ENCODE measurements at regions of chr1 and their contacts with region 1.

Region 1: DNA sequence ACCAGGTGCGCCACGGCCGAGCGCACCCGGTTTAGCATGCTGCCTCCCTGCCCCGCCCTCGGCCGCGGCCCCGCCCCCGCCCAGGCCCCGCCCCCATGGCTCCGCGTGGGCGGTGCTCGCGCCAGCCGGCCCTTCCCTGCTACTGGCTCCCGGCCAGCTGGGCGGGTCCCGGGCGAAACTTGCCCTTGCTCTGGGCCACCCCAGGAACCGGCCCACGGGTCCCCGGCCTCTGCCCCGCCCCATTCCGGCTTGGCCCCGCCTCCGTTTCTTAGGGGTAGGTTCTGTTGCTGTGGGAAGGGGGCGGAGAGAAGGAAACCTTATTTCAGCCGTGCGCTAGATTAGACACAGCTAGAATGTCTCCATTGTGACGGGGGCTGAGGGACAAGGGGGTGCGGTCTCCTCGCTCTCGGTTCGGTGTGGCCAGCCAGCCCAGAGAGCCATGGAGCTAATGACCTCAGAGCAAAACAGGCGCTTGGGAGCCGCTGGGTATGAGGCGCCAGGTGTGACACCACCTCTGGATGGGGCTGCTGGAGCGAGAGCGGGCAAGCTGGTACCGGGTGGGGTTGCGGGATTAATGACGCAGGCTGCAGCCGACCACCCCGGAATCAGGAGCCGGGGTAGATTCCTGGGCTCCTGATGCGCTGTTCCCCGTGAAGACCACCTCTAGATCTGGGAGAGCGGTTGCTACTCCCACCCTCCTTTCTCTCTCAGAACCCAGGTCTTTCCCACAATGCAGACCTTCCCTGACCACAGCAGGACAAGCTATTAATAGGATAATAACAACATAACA is at the start of gene PPM1J:
- DNase-seq: peak; percentile 97
- H3K4me3 ChIP-seq: peak within 1 kb of the TSS; percentile 40 to 45 (median 42)
- H3K27ac ChIP-seq: no peak within 1 kb of the TSS
- H3K4me1 ChIP-seq: peaks cover 11% of the 10 kb centered on the region
- H3K27me3 ChIP-seq: no peaks in the 10 kb centered on the region
- CTCF ChIP-seq: no peak
- POLR2A ChIP-seq: no peak
- total RNA-seq, gene PPM1J: 1.7 and 2.4 TPM in 2 replicates

Region 2: GRCh38 chr1:112619520-112620376 is 95.7 kb before region 1 on chr1 and contains the start of gene CAPZA1:
- CTCF ChIA-PET with region 1: no interaction called
- POLR2A ChIA-PET with region 1: no interaction called
- dilution Hi-C with region 1: no loop called
- intact Hi-C with region 1: loop called (anchors 2 kb)
- DNase-seq: peak; percentile 94
- H3K4me3 ChIP-seq: peak within 1 kb of the TSS; percentile 94 to 98 (median 98)
- H3K27ac ChIP-seq: peak within 1 kb of the TSS; percentile 91
- H3K4me1 ChIP-seq: peaks cover 32% of the 10 kb centered on the region
- H3K27me3 ChIP-seq: no peaks in the 10 kb centered on the region
- CTCF ChIP-seq: no peak
- POLR2A ChIP-seq: peak; percentile 98
- total RNA-seq, gene CAPZA1: 177 and 183 TPM in 2 replicates

Region 3: GRCh38 chr1:112803906-112804762 is 88.7 kb after region 1 on chr1:
- CTCF ChIA-PET with region 1: interaction called, 441 read pairs
- POLR2A ChIA-PET with region 1: no interaction called
- dilution Hi-C with region 1: loop called (anchors 5 kb)
- intact Hi-C with region 1: loop called (anchors 1 kb)
- DNase-seq: peak; percentile 69
- H3K4me3 ChIP-seq: no peak overlapping the region
- H3K27ac ChIP-seq: no peak overlapping the region
- H3K4me1 ChIP-seq: no peaks in the 10 kb centered on the region
- H3K27me3 ChIP-seq: no peaks in the 10 kb centered on the region
- CTCF ChIP-seq: peak; percentile 77 to 91
- POLR2A ChIP-seq: no peak

Region 4: DNA sequence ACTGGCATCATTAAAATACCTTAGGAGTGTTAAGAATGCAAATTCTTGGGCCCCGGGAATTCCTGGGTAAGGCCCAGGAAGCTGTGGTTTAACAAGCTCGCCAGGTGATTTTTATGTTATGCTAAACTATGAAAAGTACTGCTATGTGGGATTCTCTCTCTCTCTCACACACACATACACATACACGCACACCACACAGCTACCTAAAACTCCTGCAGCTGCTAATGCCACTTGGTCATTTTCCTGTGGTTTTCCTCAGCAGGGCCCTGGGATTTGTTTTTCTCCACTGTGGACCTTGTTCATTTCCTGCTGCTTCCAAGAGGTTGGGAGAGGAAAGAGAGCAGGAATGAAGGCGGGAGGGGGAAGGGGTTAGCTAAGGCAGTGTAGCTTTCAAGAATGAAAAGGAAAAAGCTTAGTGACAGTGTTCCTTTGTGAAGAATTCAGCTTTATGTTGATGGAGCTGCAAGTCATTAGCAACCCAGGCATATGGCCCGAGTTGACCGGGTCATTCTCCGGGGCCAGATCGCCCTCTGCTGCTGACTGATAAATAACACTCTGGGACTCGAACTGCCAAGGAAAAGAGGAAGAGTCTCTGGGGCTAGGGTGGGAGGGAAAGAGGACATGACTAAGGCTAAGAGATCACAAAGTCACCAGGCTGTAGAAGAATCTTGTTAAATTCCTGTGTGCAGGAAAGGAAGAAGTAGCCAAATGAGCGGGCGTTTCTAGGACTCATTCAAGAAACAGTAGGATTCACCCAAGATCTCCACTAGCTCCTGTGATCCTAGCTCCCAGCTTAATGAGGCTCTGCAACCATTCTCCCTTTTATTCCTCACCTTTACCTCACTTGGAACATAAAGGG is 327.1 kb after region 1 on chr1:
- CTCF ChIA-PET with region 1: interaction called, 25 read pairs
- POLR2A ChIA-PET with region 1: no interaction called
- dilution Hi-C with region 1: no loop called
- intact Hi-C with region 1: loop called (anchors 1 kb)
- DNase-seq: peak; percentile 96
- H3K4me3 ChIP-seq: peak overlapping the region in 1 of 3 experiments; percentile 29
- H3K27ac ChIP-seq: peak overlapping the region; percentile 84
- H3K4me1 ChIP-seq: peaks cover 40% of the 10 kb centered on the region
- H3K27me3 ChIP-seq: no peaks in the 10 kb centered on the region
- CTCF ChIP-seq: peak; percentile 50 to 56
- POLR2A ChIP-seq: no peak

Region 5: DNA sequence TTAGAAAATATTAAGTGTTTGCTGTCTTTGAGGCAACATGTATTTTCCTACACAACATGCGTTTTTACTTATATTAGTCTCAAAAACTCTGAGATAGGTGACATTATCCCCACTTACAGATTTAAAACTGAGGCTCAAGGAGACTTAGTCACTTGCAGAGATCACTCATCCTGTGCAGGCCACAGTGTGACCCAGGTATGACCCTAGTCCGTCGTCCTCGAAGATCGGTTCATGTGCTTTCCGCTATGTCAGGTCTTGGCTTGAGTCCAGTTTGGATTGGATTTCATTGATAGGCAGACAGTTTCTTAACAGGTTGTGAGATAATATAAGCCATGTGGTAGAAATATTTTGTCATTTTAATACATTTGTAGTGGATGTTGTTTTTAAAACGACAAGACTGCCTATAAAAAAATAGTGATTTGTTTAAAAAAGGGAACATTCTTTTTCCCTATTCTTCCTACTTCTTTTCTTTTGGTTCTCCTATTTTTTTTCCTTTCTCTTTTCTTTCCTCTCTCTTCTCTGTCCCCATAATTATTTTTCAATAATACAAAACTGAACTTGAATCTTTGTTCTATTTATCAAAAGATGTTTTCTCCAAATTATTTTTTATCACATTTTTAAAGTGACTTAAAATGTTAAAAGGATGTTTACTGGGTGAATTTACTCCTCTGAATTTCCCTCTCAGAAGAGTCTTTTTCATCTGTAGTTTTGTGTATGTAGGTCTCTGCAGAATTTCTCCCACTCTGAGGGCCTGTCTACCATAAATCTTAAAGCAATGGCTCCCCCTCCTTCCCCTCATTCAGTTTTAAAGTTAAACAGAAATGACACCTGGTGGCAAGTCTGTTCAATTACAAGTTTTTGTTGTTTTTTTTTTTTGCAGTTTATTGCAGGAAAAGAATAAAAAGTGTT is 962.0 kb after region 1 on chr1:
- CTCF ChIA-PET with region 1: interaction called, 9 read pairs
- POLR2A ChIA-PET with region 1: no interaction called
- dilution Hi-C with region 1: no loop called
- intact Hi-C with region 1: loop called (anchors 1 kb)
- DNase-seq: peak; percentile 67
- H3K4me3 ChIP-seq: no peak overlapping the region
- H3K27ac ChIP-seq: no peak overlapping the region
- H3K4me1 ChIP-seq: peaks cover 8% of the 10 kb centered on the region
- H3K27me3 ChIP-seq: no peaks in the 10 kb centered on the region
- CTCF ChIP-seq: peak; percentile 18 to 33
- POLR2A ChIP-seq: no peak